Lower leg skin (tissue), 4 donors: ENCODE measurements at regions of chr9 and their contacts with region 1.

Region 1: GRCh38 chr9:131393622-131394463 is at the start of gene PRRC2B:
- DNase-seq: peak; percentile 68 to 96
- H3K4me3 ChIP-seq: peak within 1 kb of the TSS; percentile 62
- CTCF ChIP-seq: no peak
- POLR2A ChIP-seq: peak in 1 of 2 donors; percentile 27
- total RNA-seq, gene PRRC2B: 102 to 168 (median 144) TPM

Region 2: GRCh38 chr9:131423171-131423581 is 29.3 kb after region 1 on chr9:
- intact Hi-C with region 1: no loop called
- DNase-seq: peak; percentile 60 to 89
- H3K4me3 ChIP-seq: no peak overlapping the region
- CTCF ChIP-seq: no peak
- POLR2A ChIP-seq: no peak

Region 3: GRCh38 chr9:131491001-131491710 is 97.3 kb after region 1 on chr9:
- intact Hi-C with region 1: loop called (anchors 10 kb)
- DNase-seq: no peak
- H3K4me3 ChIP-seq: no peak overlapping the region
- CTCF ChIP-seq: no peak
- POLR2A ChIP-seq: no peak